Transverse colon (tissue), 4 donors: ENCODE measurements at regions of chr15 and their contacts with region 1.

Region 1: GRCh38 chr15:83436458-83437158 is 10.5 kb upstream of the SH3GL3 start:
- DNase-seq: no peak
- H3K4me3 ChIP-seq: no peak overlapping the region
- H3K27ac ChIP-seq: no peak overlapping the region
- H3K4me1 ChIP-seq: no peaks in the 10 kb centered on the region
- H3K27me3 ChIP-seq: no peaks in the 10 kb centered on the region
- CTCF ChIP-seq: peak in 2 of 5 experiments; percentile 16 to 20
- EP300 ChIP-seq: no peak
- POLR2A ChIP-seq: no peak

Region 2: GRCh38 chr15:83248151-83249029 is 188.2 kb before region 1 on chr15:
- in situ Hi-C with region 1: loop called in 1 of 4 experiments (anchors 10 kb)
- intact Hi-C with region 1: loop called (anchors 10 kb)
- DNase-seq: no peak
- H3K4me3 ChIP-seq: no peak overlapping the region
- H3K27ac ChIP-seq: no peak overlapping the region
- H3K4me1 ChIP-seq: no peaks in the 10 kb centered on the region
- H3K27me3 ChIP-seq: peaks cover 26% of the 10 kb centered on the region
- CTCF ChIP-seq: peak; percentile 76 to 98 (median 93)
- EP300 ChIP-seq: no peak
- POLR2A ChIP-seq: no peak

Region 3: GRCh38 chr15:84035399-84035766 is 598.8 kb after region 1 on chr15:
- in situ Hi-C with region 1: no loop called
- intact Hi-C with region 1: loop called (anchors 10 kb)
- DNase-seq: no peak
- H3K4me3 ChIP-seq: no peak overlapping the region
- H3K27ac ChIP-seq: no peak overlapping the region
- H3K4me1 ChIP-seq: no peaks in the 10 kb centered on the region
- H3K27me3 ChIP-seq: no peaks in the 10 kb centered on the region
- CTCF ChIP-seq: peak in 4 of 5 experiments; percentile 18 to 42 (median 30)
- EP300 ChIP-seq: no peak
- POLR2A ChIP-seq: no peak